Body of pancreas (tissue), 4 donors: ENCODE measurements at regions of chr2 and their contacts with region 1.

Region 1: DNA sequence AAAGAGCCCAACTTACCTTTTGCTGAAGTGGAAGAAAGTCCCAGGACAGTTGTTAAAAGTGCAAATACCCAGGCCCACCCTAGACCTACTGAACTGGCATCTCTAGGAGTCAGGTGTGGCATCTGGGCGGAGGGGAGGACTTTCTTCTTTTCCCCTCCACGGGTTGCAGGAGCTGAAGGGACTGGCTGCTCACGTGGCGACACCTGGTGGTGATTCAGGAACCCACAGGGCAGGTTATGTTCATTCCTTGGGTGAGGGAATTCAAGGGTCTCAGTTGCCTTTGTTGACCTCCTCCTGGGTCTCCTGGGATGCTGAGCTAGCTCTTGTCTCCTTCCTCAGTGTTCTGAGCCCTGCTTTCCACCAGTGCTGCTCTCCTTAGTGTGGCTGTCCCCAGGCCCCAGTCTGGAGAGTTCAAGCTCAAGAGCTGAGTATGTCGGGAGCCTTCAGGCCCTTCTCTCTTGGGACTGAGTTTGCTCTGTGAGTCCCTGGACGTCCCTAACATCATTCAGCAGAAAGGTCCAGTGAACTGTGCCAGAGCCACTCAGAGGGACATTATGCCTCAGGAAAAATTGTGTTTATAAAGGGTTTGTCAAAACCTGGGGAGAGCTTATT is 56.9 kb downstream of the DYSF start:
- DNase-seq: peak; percentile 72 to 78 (median 72)
- ATAC-seq: peak; percentile 66
- H3K4me3 ChIP-seq: no peak overlapping the region
- H3K27ac ChIP-seq: no peak overlapping the region
- H3K4me1 ChIP-seq: no peaks in the 10 kb centered on the region
- H3K27me3 ChIP-seq: no peaks in the 10 kb centered on the region
- CTCF ChIP-seq: peak; percentile 77 to 90 (median 82)
- POLR2A ChIP-seq: no peak

Region 2: DNA sequence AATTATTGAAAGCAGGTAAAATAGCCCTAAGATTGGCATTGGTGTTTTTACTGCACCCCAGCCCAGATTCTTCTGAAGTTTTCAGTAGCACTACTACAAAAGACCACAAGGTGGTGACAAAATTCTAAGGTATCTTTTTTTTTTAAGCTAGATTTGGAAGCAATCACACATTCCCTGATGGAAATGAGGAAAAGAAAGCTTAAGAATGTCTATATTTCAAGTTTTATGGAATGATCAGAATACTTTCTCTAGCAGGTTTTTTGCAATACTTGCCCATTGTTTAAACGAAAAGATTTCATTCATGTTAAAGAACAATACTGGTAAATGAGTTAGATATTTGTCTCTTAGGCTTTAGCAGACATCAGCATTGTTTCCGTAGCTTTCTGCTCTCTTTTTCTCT is 210.8 kb before region 1 on chr2:
- intact Hi-C with region 1: loop called (anchors 2 kb)
- DNase-seq: peak in 1 of 4 donors; percentile 5
- ATAC-seq: peak; percentile 45
- H3K4me3 ChIP-seq: no peak overlapping the region
- H3K27ac ChIP-seq: no peak overlapping the region
- H3K4me1 ChIP-seq: no peaks in the 10 kb centered on the region
- H3K27me3 ChIP-seq: no peaks in the 10 kb centered on the region
- CTCF ChIP-seq: peak; percentile 55 to 81 (median 66)
- POLR2A ChIP-seq: no peak